Gastrocnemius medialis (tissue), 4 donors: ENCODE measurements at regions of chr9 and their contacts with region 1.

Region 1: GRCh38 chr9:503881-504852 is 289.5 kb downstream of the DOCK8 start:
- DNase-seq: peak; percentile 47 to 64
- ATAC-seq: peak; percentile 89 to 90
- H3K4me3 ChIP-seq: peak within 1 kb of the TSS; percentile 64 to 88 (median 72)
- H3K27ac ChIP-seq: peak within 1 kb of the TSS; percentile 64 to 94 (median 87)
- H3K4me1 ChIP-seq: peaks cover 0 to 8% of the 10 kb centered on the region in 2 donors
- H3K27me3 ChIP-seq: no peaks in the 10 kb centered on the region
- CTCF ChIP-seq: peak in 3 of 5 experiments; percentile 8 to 56 (median 28)
- POLR2A ChIP-seq: peak; percentile 34 to 59

Region 2: GRCh38 chr9:469672-470551 is 34.3 kb before region 1 on chr9:
- in situ Hi-C with region 1: no loop called
- intact Hi-C with region 1: loop called (anchors 1 kb)
- DNase-seq: peak; percentile 72 to 83
- ATAC-seq: peak; percentile 88 to 90
- H3K4me3 ChIP-seq: peak overlapping the region; percentile 69 to 90 (median 84)
- H3K27ac ChIP-seq: peak overlapping the region; percentile 63 to 88 (median 84)
- H3K4me1 ChIP-seq: peaks cover 15 to 16% of the 10 kb centered on the region in 2 donors
- H3K27me3 ChIP-seq: no peaks in the 10 kb centered on the region
- CTCF ChIP-seq: no peak
- POLR2A ChIP-seq: peak in 1 of 2 donors; percentile 43

Region 3: GRCh38 chr9:546797-547223 is 42.6 kb after region 1 on chr9:
- in situ Hi-C with region 1: no loop called
- intact Hi-C with region 1: loop called (anchors 5 kb)
- DNase-seq: peak in 1 of 2 donors; percentile 8
- ATAC-seq: peak; percentile 77 to 84
- H3K4me3 ChIP-seq: peak overlapping the region in 2 of 4 donors; percentile 8 to 23
- H3K27ac ChIP-seq: peak overlapping the region in 3 of 4 donors; percentile 16 to 57 (median 23)
- H3K4me1 ChIP-seq: peaks cover 11 to 15% of the 10 kb centered on the region in 2 donors
- H3K27me3 ChIP-seq: no peaks in the 10 kb centered on the region
- CTCF ChIP-seq: peak in 2 of 5 experiments; percentile 37 to 45
- POLR2A ChIP-seq: no peak